AG04450 (cell line): ENCODE measurements at regions of chr15 and their contacts with region 1.

Region 1: DNA sequence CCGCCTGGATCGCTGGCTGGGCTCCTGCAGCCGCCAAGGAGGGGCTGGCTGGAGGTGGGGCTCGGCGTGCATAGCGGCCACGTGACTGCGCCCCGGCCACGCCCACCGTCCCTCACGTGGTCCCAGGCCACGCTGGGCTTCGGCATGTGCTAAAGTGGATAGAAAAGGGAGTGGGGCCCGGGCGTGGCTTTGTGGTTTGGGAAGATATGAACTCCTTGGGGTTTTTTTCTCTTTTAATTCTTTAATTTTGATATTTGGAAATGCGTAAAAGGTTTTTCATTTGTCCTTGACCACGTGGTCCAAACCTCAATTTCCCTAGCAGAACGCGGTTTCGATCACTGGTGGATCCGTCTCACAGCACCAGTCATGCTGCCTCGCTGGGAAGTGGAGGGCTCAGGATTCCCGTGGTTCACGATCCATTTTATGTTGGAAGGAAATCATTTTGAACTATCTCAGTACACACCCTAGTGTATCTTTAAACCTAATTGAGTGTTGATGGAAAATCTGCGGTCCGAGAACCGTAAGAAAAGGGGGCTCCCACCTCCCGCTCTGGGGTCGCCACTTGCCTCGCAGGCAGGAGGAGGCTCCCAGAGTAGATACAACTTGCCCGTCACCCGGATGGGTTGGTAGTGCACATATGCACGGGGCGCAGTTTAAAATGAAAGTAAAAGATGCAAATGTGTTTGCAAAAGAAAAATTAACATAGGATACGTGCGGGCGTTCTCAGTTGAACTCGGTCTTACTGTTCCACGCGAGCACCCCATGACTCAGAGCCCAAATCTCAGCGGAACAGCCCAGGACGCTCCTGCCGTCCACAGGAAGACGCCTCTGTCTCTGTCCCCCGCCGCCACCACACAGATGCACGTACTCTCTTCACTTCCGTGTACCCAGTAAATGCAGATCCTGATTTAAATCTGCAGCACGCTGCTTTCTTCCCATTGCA is 141.9 kb downstream of the PGPEP1L start:
- DNase-seq: no peak
- H3K4me3 ChIP-seq: peak overlapping the region; percentile 59
- H3K27ac ChIP-seq: peak overlapping the region; percentile 89
- H3K27me3 ChIP-seq: no peaks in the 10 kb centered on the region
- CTCF ChIP-seq: no peak

Region 2: DNA sequence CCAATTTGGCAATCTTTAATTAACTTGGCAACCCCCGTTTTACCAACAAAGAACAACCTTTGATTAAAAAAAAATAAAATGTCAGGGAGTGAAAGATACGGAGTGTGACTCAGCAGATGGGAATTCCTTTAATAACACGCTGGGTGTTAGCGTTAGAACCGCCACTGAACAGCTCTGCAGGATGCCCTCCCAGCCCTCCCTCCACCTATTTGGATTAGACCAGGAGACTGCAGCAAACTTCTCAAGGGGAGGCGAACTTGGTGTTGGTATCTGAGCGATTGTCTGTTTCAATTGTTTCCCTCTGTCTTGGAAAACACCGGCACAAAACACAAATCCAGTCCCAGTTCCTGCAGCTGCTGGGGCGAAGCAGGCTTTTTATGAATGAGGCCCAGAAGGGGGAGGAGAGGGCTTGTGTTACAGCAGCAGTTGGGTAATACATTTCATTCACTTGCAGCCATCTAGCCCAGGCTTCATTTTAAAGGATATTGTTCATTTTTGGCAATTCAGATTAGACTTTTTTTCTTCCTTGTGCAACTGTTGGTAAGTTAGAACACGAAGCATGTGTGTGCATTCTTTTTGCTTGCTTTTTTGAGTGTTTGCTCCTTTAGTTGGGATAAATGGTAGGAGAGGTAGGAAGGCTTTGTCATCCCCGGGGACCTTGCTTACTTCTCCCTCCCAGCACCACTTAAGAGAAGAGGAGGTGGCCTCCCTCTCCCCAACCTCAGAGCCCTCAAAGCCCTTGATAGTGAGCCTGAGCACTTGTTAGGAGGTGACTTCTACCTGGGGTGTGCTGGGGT is 65.0 kb before region 1 on chr15:
- CTCF ChIA-PET with region 1: no interaction called
- POLR2A ChIA-PET with region 1: no interaction called
- DNase-seq: peak; percentile 66
- H3K4me3 ChIP-seq: peak overlapping the region; percentile 37
- H3K27ac ChIP-seq: peak overlapping the region; percentile 73
- H3K27me3 ChIP-seq: no peaks in the 10 kb centered on the region
- CTCF ChIP-seq: no peak

Region 3: GRCh38 chr15:98904544-98904943 is 38.9 kb after region 1 on chr15:
- CTCF ChIA-PET with region 1: interaction called, 12 read pairs
- POLR2A ChIA-PET with region 1: no interaction called
- DNase-seq: peak; percentile 39
- H3K4me3 ChIP-seq: no peak overlapping the region
- H3K27ac ChIP-seq: no peak overlapping the region
- H3K27me3 ChIP-seq: no peaks in the 10 kb centered on the region
- CTCF ChIP-seq: peak; percentile 78

Region 4: DNA sequence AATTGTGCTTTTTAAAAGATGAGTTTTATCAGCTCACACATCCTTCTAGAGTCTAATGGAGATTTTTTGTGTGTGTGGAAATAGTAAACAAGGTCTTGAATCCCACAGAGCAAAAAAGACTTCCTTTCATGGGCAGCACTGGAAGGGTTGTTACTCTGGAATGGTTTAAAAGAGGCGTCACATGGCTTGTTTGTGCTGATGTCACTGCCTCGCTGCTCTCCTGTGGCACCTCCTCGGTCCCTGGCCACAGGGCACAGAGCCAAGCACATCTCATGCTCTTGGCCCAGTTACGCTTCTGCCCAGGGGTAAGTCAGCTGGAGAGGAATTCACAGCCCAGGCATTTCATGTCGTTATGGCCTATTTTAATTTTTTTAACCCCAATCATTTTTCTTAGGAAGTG is 88.7 kb after region 1 on chr15:
- CTCF ChIA-PET with region 1: no interaction called
- POLR2A ChIA-PET with region 1: no interaction called
- DNase-seq: peak; percentile 37
- H3K4me3 ChIP-seq: no peak overlapping the region
- H3K27ac ChIP-seq: peak overlapping the region; percentile 72
- H3K27me3 ChIP-seq: no peaks in the 10 kb centered on the region
- CTCF ChIP-seq: no peak